Vagina (tissue), 2 donors: ENCODE measurements at regions of chr1 and their contacts with region 1.

Region 1: DNA sequence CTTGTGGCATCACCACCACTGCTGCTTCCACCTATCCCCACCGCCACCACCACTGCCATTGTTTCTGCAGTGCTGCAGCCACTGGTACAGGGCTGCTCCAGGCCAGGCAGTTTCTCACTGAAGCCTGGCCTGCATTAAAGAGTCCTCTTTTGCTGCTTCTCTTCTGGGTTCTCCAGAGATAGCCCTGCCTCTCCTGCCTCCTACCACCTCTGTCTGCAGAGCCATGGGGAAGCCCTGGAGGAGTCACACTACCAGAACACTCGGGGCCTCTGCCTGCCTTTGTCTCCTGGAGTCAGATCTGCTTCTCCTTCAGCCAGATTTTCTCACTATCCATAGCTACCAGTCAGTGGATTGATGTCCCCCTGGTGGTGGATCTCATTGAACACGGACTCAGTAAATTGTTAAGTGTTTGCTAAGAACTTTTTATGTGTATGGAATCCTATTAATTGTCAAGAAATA is 37.7 kb upstream of the DDAH1 start:
- DNase-seq: no peak
- H3K4me3 ChIP-seq: no peak overlapping the region
- H3K27ac ChIP-seq: no peak overlapping the region
- H3K4me1 ChIP-seq: peaks cover 5% of the 10 kb centered on the region
- H3K27me3 ChIP-seq: no peaks in the 10 kb centered on the region
- CTCF ChIP-seq: peak in 2 of 3 experiments; percentile 27 to 47
- POLR2A ChIP-seq: no peak

Region 2: GRCh38 chr1:85307987-85308832 is 194.4 kb before region 1 on chr1:
- intact Hi-C with region 1: loop called (anchors 5 kb)
- DNase-seq: no peak
- H3K4me3 ChIP-seq: no peak overlapping the region
- H3K27ac ChIP-seq: no peak overlapping the region
- H3K4me1 ChIP-seq: no peaks in the 10 kb centered on the region
- H3K27me3 ChIP-seq: no peaks in the 10 kb centered on the region
- CTCF ChIP-seq: peak; percentile 80 to 97 (median 97)
- POLR2A ChIP-seq: no peak

Region 3: DNA sequence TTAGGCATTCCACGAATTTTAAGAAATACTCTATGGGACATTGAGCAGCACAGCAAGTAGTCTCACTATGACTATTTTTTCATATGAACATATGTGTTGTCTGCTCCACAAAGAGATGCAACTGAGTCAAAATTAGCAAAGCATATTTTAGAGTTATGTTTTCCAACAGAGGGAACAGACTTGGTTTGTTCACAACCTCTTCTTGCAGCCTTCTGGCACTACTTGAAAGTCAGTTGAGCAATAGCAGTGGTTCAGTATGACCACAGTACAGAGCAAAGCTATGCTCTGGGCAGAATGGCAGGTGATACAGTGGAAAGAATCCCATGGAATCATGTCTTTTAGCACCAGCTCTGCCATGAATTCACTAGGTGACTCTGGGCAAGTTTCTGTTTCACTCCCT is 83.1 kb after region 1 on chr1:
- intact Hi-C with region 1: no loop called
- DNase-seq: no peak
- H3K4me3 ChIP-seq: no peak overlapping the region
- H3K27ac ChIP-seq: no peak overlapping the region
- H3K4me1 ChIP-seq: peaks cover 9% of the 10 kb centered on the region
- H3K27me3 ChIP-seq: no peaks in the 10 kb centered on the region
- CTCF ChIP-seq: no peak
- POLR2A ChIP-seq: no peak

Region 4: GRCh38 chr1:85681087-85681486 is 178.4 kb after region 1 on chr1:
- intact Hi-C with region 1: loop called (anchors 10 kb)
- DNase-seq: no peak
- H3K4me3 ChIP-seq: no peak overlapping the region
- H3K27ac ChIP-seq: no peak overlapping the region
- H3K4me1 ChIP-seq: no peaks in the 10 kb centered on the region
- H3K27me3 ChIP-seq: no peaks in the 10 kb centered on the region
- CTCF ChIP-seq: no peak
- POLR2A ChIP-seq: no peak